CD4-positive, alpha-beta T cell (primary cell): ENCODE measurements at regions of chr19 and their contacts with region 1.

Region 1: DNA sequence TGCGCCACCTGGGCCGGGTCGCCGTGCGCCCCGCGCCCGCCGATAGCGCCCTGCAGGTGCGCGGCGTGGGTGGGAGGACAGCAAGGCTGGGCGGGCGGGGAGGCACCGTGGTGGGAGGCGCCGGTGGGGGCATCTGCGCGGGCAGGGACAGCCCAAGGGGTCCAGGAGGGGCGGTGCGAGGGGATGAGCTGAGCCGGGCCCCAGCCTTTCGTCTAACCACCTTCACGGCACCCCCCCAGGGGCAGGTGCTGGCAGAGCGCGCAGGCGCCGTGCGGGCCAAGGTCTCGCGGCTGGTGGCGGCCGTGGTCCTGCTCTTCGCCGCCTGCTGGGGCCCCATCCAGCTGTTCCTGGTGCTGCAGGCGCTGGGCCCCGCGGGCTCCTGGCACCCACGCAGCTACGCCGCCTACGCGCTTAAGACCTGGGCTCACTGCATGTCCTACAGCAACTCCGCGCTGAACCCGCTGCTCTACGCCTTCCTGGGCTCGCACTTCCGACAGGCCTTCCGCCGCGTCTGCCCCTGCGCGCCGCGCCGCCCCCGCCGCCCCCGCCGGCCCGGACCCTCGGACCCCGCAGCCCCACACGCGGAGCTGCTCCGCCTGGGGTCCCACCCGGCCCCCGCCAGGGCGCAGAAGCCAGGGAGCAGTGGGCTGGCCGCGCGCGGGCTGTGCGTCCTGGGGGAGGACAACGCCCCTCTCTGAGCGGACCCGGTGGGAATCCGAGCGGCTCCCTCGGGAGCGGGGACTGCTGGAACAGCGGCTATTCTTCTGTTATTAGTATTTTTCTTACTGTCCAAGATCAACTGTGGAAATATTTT is 3.1 kb downstream of the KISS1R start:
- DNase-seq: peak; percentile 54 to 91 (median 72)
- ATAC-seq: peak; percentile 51
- H3K4me3 ChIP-seq: peak overlapping the region; percentile 43
- H3K4me3 Mint-ChIP-seq: peak overlapping the region; percentile 96
- H3K27ac ChIP-seq: peak overlapping the region in 1 of 2 donors; percentile 41
- H3K27ac Mint-ChIP-seq: peak overlapping the region; percentile 96
- H3K4me1 ChIP-seq: peaks cover 62% of the 10 kb centered on the region
- H3K4me1 Mint-ChIP-seq: peaks cover 21% of the 10 kb centered on the region
- H3K27me3 ChIP-seq: peaks cover 11 to 22% of the 10 kb centered on the region in 2 experiments
- H3K27me3 Mint-ChIP-seq: peaks cover 4% of the 10 kb centered on the region
- CTCF ChIP-seq: no peak

Region 2: GRCh38 chr19:872266-872951 is 47.8 kb before region 1 on chr19:
- CTCF ChIA-PET with region 1: interaction called, 4 read pairs
- POLR2A ChIA-PET with region 1: interaction called, 10 read pairs
- intact Hi-C with region 1: no loop called
- DNase-seq: peak; percentile 72 to 93 (median 80)
- ATAC-seq: peak; percentile 82
- H3K4me3 ChIP-seq: peak overlapping the region; percentile 58
- H3K4me3 Mint-ChIP-seq: peak overlapping the region; percentile 89
- H3K27ac ChIP-seq: peak overlapping the region; percentile 41 to 62
- H3K27ac Mint-ChIP-seq: peak overlapping the region; percentile 94
- H3K4me1 ChIP-seq: peaks cover 16% of the 10 kb centered on the region
- H3K4me1 Mint-ChIP-seq: peaks cover 18% of the 10 kb centered on the region
- H3K27me3 ChIP-seq: no peaks in the 10 kb centered on the region
- H3K27me3 Mint-ChIP-seq: no peaks in the 10 kb centered on the region
- CTCF ChIP-seq: no peak

Region 3: GRCh38 chr19:907183-907853 is 12.9 kb before region 1 on chr19:
- CTCF ChIA-PET with region 1: interaction called, 3 read pairs
- POLR2A ChIA-PET with region 1: interaction called, 22 read pairs
- intact Hi-C with region 1: no loop called
- DNase-seq: peak in 4 of 14 experiments; percentile 47 to 62 (median 53)
- ATAC-seq: no peak
- H3K4me3 ChIP-seq: no peak overlapping the region
- H3K4me3 Mint-ChIP-seq: peak overlapping the region; percentile 71
- H3K27ac ChIP-seq: peak overlapping the region; percentile 69 to 99
- H3K27ac Mint-ChIP-seq: peak overlapping the region; percentile 100
- H3K4me1 ChIP-seq: peaks cover 81% of the 10 kb centered on the region
- H3K4me1 Mint-ChIP-seq: peaks cover 56% of the 10 kb centered on the region
- H3K27me3 ChIP-seq: no peaks in the 10 kb centered on the region
- H3K27me3 Mint-ChIP-seq: no peaks in the 10 kb centered on the region
- CTCF ChIP-seq: no peak